GM13977 (cell line): ENCODE measurements at regions of chr2 and their contacts with region 1.

Region 1: GRCh38 chr2:56183643-56184499 is at the start of gene CCDC85A:
- DNase-seq: peak; percentile 90
- CTCF ChIP-seq: peak; percentile 94

Region 2: GRCh38 chr2:57516698-57517340 is 1332.9 kb after region 1 on chr2:
- in situ Hi-C with region 1: loop called (anchors 25 kb)
- DNase-seq: peak; percentile 47
- CTCF ChIP-seq: peak; percentile 41